Activated CD4-positive, alpha-beta T cell treated with anti-CD3 and anti-CD28 coated beads for 36 hours (primary cell): ENCODE measurements at regions of chrX and their contacts with region 1.

Region 1: GRCh38 chrX:18984381-18985185 is 669 bp upstream of the PHKA2 start:
- DNase-seq: peak; percentile 91
- ATAC-seq: peak; percentile 90
- H3K4me3 Mint-ChIP-seq: peak overlapping the region; percentile 84
- H3K27ac Mint-ChIP-seq: peak overlapping the region; percentile 93
- H3K4me1 Mint-ChIP-seq: peaks cover 11% of the 10 kb centered on the region
- H3K27me3 Mint-ChIP-seq: no peaks in the 10 kb centered on the region

Region 2: DNA sequence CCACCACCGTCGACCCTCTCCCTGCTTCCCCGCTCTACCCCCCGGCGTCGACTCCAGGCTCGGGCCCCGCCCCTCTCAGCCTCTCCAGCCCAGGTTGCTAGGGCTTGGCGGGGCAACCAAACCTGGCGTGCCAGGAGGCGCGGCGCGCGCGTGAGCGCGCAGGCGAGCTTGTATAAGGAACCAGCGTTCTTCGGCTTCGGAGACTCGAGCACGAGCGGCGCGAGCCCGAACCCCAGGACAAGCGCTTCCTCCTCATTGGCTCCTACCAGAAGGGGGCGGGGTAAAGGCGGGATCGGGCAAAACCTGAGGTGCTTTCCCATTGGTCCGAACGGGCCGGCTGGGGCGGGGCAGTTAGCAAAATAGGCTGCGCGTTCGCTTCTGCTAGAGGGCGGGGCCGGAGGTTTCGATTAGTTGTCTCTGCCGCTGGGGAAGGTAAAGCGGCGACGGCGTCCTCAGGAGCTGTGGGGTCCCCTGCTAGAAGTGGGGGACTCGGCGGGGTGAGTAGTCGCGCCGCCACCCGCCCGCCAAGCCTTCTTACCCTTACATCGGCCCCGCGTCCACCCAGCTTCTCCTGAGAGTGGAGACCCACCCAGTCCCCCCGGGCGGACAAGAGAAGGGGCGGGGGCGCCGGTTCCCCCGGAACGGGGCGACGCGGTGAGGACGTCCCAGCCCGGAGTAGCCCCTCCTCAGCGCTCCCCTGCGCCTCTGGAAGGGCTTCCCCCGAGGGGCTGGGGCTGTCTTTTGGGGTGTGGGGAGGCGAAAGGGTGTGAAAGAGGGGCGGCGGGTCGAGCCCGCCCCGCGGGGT is 559.2 kb before region 1 on chrX and contains the start of gene CDKL5:
- CTCF ChIA-PET with region 1: no interaction called
- POLR2A ChIA-PET with region 1: no interaction called
- intact Hi-C with region 1: loop called (anchors 1 to 10 kb)
- DNase-seq: peak; percentile 97
- ATAC-seq: peak; percentile 96
- H3K4me3 Mint-ChIP-seq: peak within 1 kb of the TSS; percentile 79
- H3K27ac Mint-ChIP-seq: peak within 1 kb of the TSS; percentile 60
- H3K4me1 Mint-ChIP-seq: peaks cover 2% of the 10 kb centered on the region
- H3K27me3 Mint-ChIP-seq: peaks cover 2% of the 10 kb centered on the region
- total RNA-seq, gene CDKL5: 1.2 to 1.5 TPM

Region 3: DNA sequence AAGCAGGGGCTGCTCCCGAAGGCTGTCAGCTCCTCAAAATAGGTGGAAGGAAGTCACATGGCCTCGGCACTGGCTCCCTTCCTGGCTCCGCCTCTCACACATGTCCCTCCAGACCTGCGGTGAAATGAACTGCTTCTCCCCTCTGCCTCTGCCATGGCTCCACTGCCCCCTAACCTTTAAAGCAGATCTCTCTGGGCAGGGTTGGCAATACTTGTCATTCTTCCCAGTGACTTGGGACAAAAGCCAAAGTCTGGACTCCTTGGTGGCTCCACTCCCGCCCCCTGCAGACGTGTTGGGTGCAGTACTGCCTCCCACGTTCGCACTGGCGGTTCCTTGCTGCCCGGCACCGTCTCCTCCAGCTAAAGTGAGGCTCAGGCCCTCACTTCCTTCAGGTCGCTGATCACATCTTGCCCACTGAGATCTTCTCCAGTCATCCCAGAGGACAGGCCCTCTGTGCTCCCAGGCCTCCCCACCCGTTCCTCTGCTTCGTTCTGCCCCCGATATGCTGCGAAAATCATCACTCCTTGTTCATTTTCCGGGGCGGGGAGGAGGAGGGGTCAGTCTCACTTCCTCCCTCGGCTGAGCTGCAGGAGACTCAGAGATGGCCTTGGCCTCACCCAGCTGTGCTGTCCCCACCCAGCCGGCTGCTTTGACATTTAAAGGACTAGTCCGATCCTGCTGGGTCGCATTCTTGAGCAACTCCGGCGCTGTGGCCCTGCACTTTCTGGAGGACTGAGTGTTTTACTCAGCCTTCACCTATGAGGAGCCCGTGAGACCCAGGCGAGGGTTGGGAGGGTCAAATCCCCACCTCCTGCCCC is 98.0 kb before region 1 on chrX:
- CTCF ChIA-PET with region 1: no interaction called
- POLR2A ChIA-PET with region 1: no interaction called
- intact Hi-C with region 1: loop called in 1 of 2 experiments (anchors 2 kb)
- DNase-seq: peak; percentile 75
- ATAC-seq: peak; percentile 78
- H3K4me3 Mint-ChIP-seq: peak overlapping the region; percentile 68
- H3K27ac Mint-ChIP-seq: peak overlapping the region; percentile 90
- H3K4me1 Mint-ChIP-seq: peaks cover 29% of the 10 kb centered on the region
- H3K27me3 Mint-ChIP-seq: no peaks in the 10 kb centered on the region

Region 4: DNA sequence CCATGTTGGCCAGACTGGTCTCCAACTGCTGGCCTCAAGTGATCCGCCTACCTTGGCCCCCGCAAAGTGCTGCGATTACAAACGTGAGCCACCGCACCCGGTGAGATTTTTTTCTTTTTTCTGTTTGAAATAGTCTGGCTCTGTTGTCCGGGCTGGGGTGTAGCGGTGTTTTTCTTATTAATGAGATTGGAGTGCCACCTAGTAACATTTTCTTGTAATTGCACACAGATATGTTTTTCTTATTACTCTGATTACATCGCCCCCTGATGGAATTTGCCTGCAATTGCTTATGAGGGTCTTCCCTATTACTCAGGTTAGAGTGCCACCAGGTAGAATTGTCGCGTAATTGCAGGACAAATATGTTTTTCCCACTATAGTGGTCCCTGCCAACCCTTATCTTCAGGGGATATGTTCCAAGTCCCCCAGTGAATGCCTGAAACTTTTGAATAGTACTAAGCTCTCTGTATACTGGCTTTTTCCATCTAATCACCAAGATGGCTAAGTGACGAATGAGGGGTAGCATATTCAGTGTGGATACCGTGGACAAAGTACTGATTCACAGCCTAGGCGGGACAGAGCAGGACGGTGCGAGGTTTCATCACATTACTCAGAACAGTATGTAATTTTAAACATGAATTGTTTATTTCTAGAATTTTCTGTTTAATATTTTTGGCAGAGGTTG is 350.5 kb after region 1 on chrX:
- CTCF ChIA-PET with region 1: interaction called, 5 read pairs
- POLR2A ChIA-PET with region 1: no interaction called
- intact Hi-C with region 1: loop called in 1 of 2 experiments (anchors 2 kb)
- DNase-seq: peak; percentile 38
- ATAC-seq: peak; percentile 53
- H3K4me3 Mint-ChIP-seq: no peak overlapping the region
- H3K27ac Mint-ChIP-seq: no peak overlapping the region
- H3K4me1 Mint-ChIP-seq: no peaks in the 10 kb centered on the region
- H3K27me3 Mint-ChIP-seq: no peaks in the 10 kb centered on the region